MCF 10A (cell line): ENCODE measurements at regions of chr1 and their contacts with region 1.

Region 1: GRCh38 chr1:84944767-84945486 is 51.9 kb upstream of the LPAR3 start:
- DNase-seq: peak; percentile 95
- H3K4me3 Mint-ChIP-seq: peak overlapping the region; percentile 67
- H3K27ac Mint-ChIP-seq: peak overlapping the region; percentile 69
- H3K4me1 Mint-ChIP-seq: peaks cover 7% of the 10 kb centered on the region
- H3K27me3 Mint-ChIP-seq: peaks cover 14% of the 10 kb centered on the region
- CTCF ChIP-seq: peak; percentile 74

Region 2: DNA sequence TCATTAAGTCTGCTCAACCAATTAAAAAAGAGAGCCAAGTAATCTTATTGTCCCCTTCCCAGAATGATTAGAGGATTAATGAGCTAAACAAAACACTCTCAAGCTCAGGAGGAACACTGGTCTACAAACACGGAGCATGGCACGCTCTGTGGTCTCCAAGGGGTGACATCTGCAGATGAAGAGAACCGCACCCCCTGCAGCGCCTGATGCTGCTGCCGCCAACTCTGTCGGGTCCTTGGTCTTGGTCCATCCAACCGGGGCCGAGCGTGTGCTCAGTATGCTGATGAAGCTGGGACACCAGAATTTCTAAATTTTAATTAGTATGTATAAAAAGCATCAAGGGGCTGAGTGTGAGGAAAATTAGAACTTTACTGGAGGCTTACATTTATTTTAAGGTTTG is 134.6 kb before region 1 on chr1:
- CTCF ChIA-PET with region 1: no interaction called
- POLR2A ChIA-PET with region 1: no interaction called
- intact Hi-C with region 1: no loop called
- DNase-seq: no peak
- H3K4me3 Mint-ChIP-seq: no peak overlapping the region
- H3K27ac Mint-ChIP-seq: no peak overlapping the region
- H3K4me1 Mint-ChIP-seq: no peaks in the 10 kb centered on the region
- H3K27me3 Mint-ChIP-seq: no peaks in the 10 kb centered on the region
- CTCF ChIP-seq: no peak

Region 3: GRCh38 chr1:84884656-84885389 is 60.1 kb before region 1 on chr1:
- CTCF ChIA-PET with region 1: no interaction called
- POLR2A ChIA-PET with region 1: no interaction called
- intact Hi-C with region 1: no loop called
- DNase-seq: peak; percentile 16
- H3K4me3 Mint-ChIP-seq: no peak overlapping the region
- H3K27ac Mint-ChIP-seq: no peak overlapping the region
- H3K4me1 Mint-ChIP-seq: peaks cover 23% of the 10 kb centered on the region
- H3K27me3 Mint-ChIP-seq: no peaks in the 10 kb centered on the region
- CTCF ChIP-seq: no peak

Region 4: GRCh38 chr1:84923317-84923716 is 21.6 kb before region 1 on chr1:
- CTCF ChIA-PET with region 1: interaction called, 10 read pairs
- POLR2A ChIA-PET with region 1: no interaction called
- intact Hi-C with region 1: no loop called
- DNase-seq: no peak
- H3K4me3 Mint-ChIP-seq: no peak overlapping the region
- H3K27ac Mint-ChIP-seq: no peak overlapping the region
- H3K4me1 Mint-ChIP-seq: no peaks in the 10 kb centered on the region
- H3K27me3 Mint-ChIP-seq: no peaks in the 10 kb centered on the region
- CTCF ChIP-seq: no peak

Region 5: GRCh38 chr1:84996846-84997666 is 52.1 kb after region 1 on chr1 and contains the start of gene MCOLN2:
- CTCF ChIA-PET with region 1: interaction called, 3 read pairs
- POLR2A ChIA-PET with region 1: no interaction called
- intact Hi-C with region 1: loop called (anchors 2 kb)
- DNase-seq: peak; percentile 49
- H3K4me3 Mint-ChIP-seq: peak within 1 kb of the TSS; percentile 77
- H3K27ac Mint-ChIP-seq: peak within 1 kb of the TSS; percentile 40
- H3K4me1 Mint-ChIP-seq: peaks cover 6% of the 10 kb centered on the region
- H3K27me3 Mint-ChIP-seq: peaks cover 12% of the 10 kb centered on the region
- CTCF ChIP-seq: no peak
- total RNA-seq, gene MCOLN2: 3.0 and 3.1 TPM in 2 replicates

Region 6: DNA sequence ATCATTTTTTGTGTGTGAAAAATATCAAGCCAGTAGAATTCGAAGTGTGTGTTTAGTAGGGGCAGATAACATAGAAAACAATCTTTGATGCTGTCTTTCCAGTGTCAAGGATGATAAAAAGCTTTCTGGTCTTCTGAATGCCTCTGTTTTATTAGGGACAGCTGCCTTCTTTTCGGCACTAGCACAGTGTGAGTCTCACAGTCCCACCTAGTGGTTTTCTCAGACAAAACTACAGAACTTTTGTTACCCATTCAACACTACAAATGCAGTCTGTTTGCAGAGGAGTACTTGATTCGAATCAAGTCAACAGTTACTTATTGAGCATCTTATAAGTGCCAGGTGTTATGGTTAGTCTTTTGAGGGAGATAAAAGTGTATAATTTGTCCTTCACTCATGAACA is 134.0 kb after region 1 on chr1:
- CTCF ChIA-PET with region 1: no interaction called
- POLR2A ChIA-PET with region 1: no interaction called
- intact Hi-C with region 1: loop called (anchors 2 kb)
- DNase-seq: peak; percentile 25
- H3K4me3 Mint-ChIP-seq: no peak overlapping the region
- H3K27ac Mint-ChIP-seq: no peak overlapping the region
- H3K4me1 Mint-ChIP-seq: no peaks in the 10 kb centered on the region
- H3K27me3 Mint-ChIP-seq: no peaks in the 10 kb centered on the region
- CTCF ChIP-seq: no peak

Region 7: DNA sequence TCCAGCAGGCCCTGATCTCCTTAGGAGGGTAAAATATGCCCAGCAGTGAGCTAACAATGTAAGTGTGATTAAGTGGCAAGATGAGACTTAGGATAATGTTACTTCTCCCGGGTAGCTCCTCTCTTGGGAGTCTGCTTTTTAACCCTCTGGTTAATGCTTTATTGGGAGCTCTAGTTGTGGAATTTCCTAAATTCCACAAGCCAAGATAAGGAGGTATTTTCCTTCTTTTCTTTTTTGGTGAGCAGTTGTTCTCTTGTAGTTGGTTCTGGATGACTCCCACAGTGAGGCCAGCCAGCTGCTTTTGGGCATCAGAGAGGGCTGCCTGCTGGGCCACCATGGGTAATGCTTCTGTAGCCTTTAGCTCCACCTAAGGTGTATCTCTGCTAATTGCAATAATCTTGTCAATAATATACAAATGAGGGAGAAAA is 295.3 kb after region 1 on chr1:
- CTCF ChIA-PET with region 1: interaction called, 6 read pairs
- POLR2A ChIA-PET with region 1: no interaction called
- intact Hi-C with region 1: loop called (anchors 1 kb)
- DNase-seq: peak; percentile 46
- H3K4me3 Mint-ChIP-seq: no peak overlapping the region
- H3K27ac Mint-ChIP-seq: no peak overlapping the region
- H3K4me1 Mint-ChIP-seq: peaks cover 11% of the 10 kb centered on the region
- H3K27me3 Mint-ChIP-seq: no peaks in the 10 kb centered on the region
- CTCF ChIP-seq: peak; percentile 40